Heart left ventricle (tissue), 16 donors: ENCODE measurements at regions of chr7 and their contacts with region 1.

Region 1: DNA sequence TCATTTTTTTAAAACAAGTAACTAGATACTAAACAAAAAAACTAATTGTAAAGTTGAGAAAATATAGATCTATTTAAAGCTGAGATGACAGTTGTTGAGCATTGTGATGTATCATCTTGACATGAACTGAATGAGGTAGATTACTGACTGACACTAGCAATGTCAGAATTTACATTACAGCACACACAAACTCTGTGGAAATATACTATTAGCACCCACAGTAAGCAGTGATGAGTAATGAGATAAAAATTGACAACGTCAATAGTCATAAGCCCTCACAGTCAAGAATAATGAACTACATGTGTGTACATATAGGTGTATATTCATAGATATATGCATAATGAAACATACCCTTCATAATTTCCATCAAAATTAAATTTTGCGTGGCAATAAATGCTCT is 368.4 kb downstream of the TFEC start:
- DNase-seq: no peak
- ATAC-seq: no peak
- H3K4me3 ChIP-seq: no peak overlapping the region
- H3K27ac ChIP-seq: no peak overlapping the region
- H3K4me1 ChIP-seq: no peaks in the 10 kb centered on the region
- H3K27me3 ChIP-seq: no peaks in the 10 kb centered on the region
- CTCF ChIP-seq: no peak
- POLR2A ChIP-seq: no peak

Region 2: GRCh38 chr7:115475761-115476385 is 186.2 kb before region 1 on chr7:
- intact Hi-C with region 1: loop called in 1 of 10 experiments (anchors 10 kb)
- DNase-seq: peak in 1 of 5 donors; percentile 8
- ATAC-seq: peak in 3 of 4 donors; percentile 59 to 71 (median 71)
- H3K4me3 ChIP-seq: no peak overlapping the region
- H3K27ac ChIP-seq: no peak overlapping the region
- H3K4me1 ChIP-seq: peaks cover 0 to 11% (median 0%) of the 10 kb centered on the region in 12 donors
- H3K27me3 ChIP-seq: peaks cover 0 to 26% (median 11%) of the 10 kb centered on the region in 9 donors
- CTCF ChIP-seq: peak in 8 of 12 donors; percentile 12 to 52 (median 33)
- POLR2A ChIP-seq: no peak

Region 3: GRCh38 chr7:115724400-115725056 is 62.4 kb after region 1 on chr7:
- intact Hi-C with region 1: loop called in 1 of 10 experiments (anchors 10 kb)
- DNase-seq: no peak
- ATAC-seq: no peak
- H3K4me3 ChIP-seq: no peak overlapping the region
- H3K27ac ChIP-seq: no peak overlapping the region
- H3K4me1 ChIP-seq: no peaks in the 10 kb centered on the region
- H3K27me3 ChIP-seq: no peaks in the 10 kb centered on the region
- CTCF ChIP-seq: no peak
- POLR2A ChIP-seq: no peak

Region 4: DNA sequence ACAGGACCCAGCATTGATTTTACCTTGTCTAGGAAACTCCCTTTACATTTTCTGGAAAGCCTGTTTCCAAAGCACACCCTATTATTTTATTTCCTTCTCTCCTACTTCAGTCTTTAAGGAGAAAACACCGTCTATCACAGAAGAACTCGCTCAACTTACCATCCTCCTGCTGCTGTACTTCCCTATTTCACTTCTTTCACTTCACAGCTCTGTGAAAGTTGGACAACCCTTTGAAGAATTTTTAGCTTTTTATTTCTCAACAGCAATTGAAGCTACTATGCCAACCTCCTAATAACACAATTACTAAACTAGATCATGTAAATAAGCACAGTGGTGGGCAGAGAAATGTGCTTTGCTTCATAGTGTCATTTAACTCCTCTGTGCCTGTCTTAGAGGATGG is 202.0 kb after region 1 on chr7:
- intact Hi-C with region 1: no loop called
- DNase-seq: no peak
- ATAC-seq: no peak
- H3K4me3 ChIP-seq: no peak overlapping the region
- H3K27ac ChIP-seq: no peak overlapping the region
- H3K4me1 ChIP-seq: no peaks in the 10 kb centered on the region
- H3K27me3 ChIP-seq: no peaks in the 10 kb centered on the region
- CTCF ChIP-seq: no peak
- POLR2A ChIP-seq: no peak